ENCODE measurements at regions of chr10 and their contacts with region 1.

Region 1: GRCh38 chr10:72048450-72049124 is 39.8 kb downstream of the SPOCK2 start:
- DNase-seq: peak; percentile 85 to 97
- H3K4me3 ChIP-seq: no peak overlapping the region
- H3K27ac ChIP-seq: no peak overlapping the region
- H3K4me1 ChIP-seq: peaks cover 0 to 2% (median 0%) of the 10 kb centered on the region in 4 experiments; a peak in 2 of 7 replicates
- H3K27me3 ChIP-seq: no peaks in the 10 kb centered on the region
- CTCF ChIP-seq: peak; percentile 94 to 100 (median 100)
- EP300 ChIP-seq: peak in 1 of 2 experiments; percentile 74; a peak in 1 of 3 replicates
- POLR2A ChIP-seq: no peak
- RAD21 ChIP-seq: peak; percentile 97 to 98

Region 2: GRCh38 chr10:71902351-71902750 is 146.2 kb before region 1 on chr10:
- CTCF ChIA-PET with region 1: interaction called, 65 read pairs
- POLR2A ChIA-PET with region 1: no interaction called
- DNase-seq: no peak
- H3K4me3 ChIP-seq: no peak overlapping the region
- H3K27ac ChIP-seq: no peak overlapping the region
- H3K4me1 ChIP-seq: no peaks in the 10 kb centered on the region
- H3K27me3 ChIP-seq: no peaks in the 10 kb centered on the region
- CTCF ChIP-seq: no peak
- EP300 ChIP-seq: no peak
- POLR2A ChIP-seq: no peak
- RAD21 ChIP-seq: no peak

Region 3: GRCh38 chr10:71963756-71964668 is 84.6 kb before region 1 on chr10 and contains the start of gene CHST3:
- CTCF ChIA-PET with region 1: interaction called, 51 read pairs
- POLR2A ChIA-PET with region 1: no interaction called
- DNase-seq: peak in 1 of 2 experiments; percentile 78
- H3K4me3 ChIP-seq: peak within 1 kb of the TSS; percentile 60 to 97 (median 70)
- H3K27ac ChIP-seq: no peak within 1 kb of the TSS
- H3K4me1 ChIP-seq: peaks cover 2 to 10% (median 7%) of the 10 kb centered on the region in 4 experiments; a peak in 4 of 7 replicates
- H3K27me3 ChIP-seq: peaks cover 3 to 50% (median 35%) of the 10 kb centered on the region in 4 experiments
- CTCF ChIP-seq: no peak
- EP300 ChIP-seq: no peak
- POLR2A ChIP-seq: peak in 1 of 2 experiments; percentile 39; a peak in 1 of 3 replicates
- RAD21 ChIP-seq: no peak
- total RNA-seq, gene CHST3: 5.7 and 5.8 TPM in 2 replicates

Region 4: GRCh38 chr10:71985542-71986250 is 62.9 kb before region 1 on chr10:
- CTCF ChIA-PET with region 1: interaction called, 10 read pairs
- POLR2A ChIA-PET with region 1: no interaction called
- DNase-seq: no peak
- H3K4me3 ChIP-seq: no peak overlapping the region
- H3K27ac ChIP-seq: no peak overlapping the region
- H3K4me1 ChIP-seq: peaks cover 0 to 3% (median 1%) of the 10 kb centered on the region in 4 experiments; a peak in 1 of 7 replicates
- H3K27me3 ChIP-seq: no peaks in the 10 kb centered on the region
- CTCF ChIP-seq: no peak
- EP300 ChIP-seq: no peak
- POLR2A ChIP-seq: no peak
- RAD21 ChIP-seq: no peak

Region 5: GRCh38 chr10:72030762-72031543 is 17.6 kb before region 1 on chr10:
- CTCF ChIA-PET with region 1: interaction called, 13 read pairs
- POLR2A ChIA-PET with region 1: interaction called, 3 read pairs
- DNase-seq: no peak
- H3K4me3 ChIP-seq: no peak overlapping the region
- H3K27ac ChIP-seq: no peak overlapping the region
- H3K4me1 ChIP-seq: no peaks in the 10 kb centered on the region; a peak in 1 of 7 replicates
- H3K27me3 ChIP-seq: 0 out of 7 replicates have a peak, but pooled peaks cover 0 to 2% (median 0%) of the 10 kb centered on the region in 4 experiments
- CTCF ChIP-seq: no peak
- EP300 ChIP-seq: peak in 1 of 2 experiments; percentile 82; a peak in 1 of 3 replicates
- POLR2A ChIP-seq: no peak
- RAD21 ChIP-seq: no peak

Region 6: GRCh38 chr10:72061491-72061890 is 12.9 kb after region 1 on chr10:
- CTCF ChIA-PET with region 1: interaction called, 100 read pairs
- POLR2A ChIA-PET with region 1: interaction called, 4 read pairs
- DNase-seq: peak in 1 of 2 experiments; percentile 71
- H3K4me3 ChIP-seq: no peak overlapping the region
- H3K27ac ChIP-seq: no peak overlapping the region
- H3K4me1 ChIP-seq: peaks cover 0 to 9% (median 7%) of the 10 kb centered on the region in 4 experiments; a peak in 4 of 7 replicates
- H3K27me3 ChIP-seq: no peaks in the 10 kb centered on the region
- CTCF ChIP-seq: peak; percentile 70 to 76 (median 71)
- EP300 ChIP-seq: no peak
- POLR2A ChIP-seq: no peak
- RAD21 ChIP-seq: peak; percentile 64 to 74

Region 7: DNA sequence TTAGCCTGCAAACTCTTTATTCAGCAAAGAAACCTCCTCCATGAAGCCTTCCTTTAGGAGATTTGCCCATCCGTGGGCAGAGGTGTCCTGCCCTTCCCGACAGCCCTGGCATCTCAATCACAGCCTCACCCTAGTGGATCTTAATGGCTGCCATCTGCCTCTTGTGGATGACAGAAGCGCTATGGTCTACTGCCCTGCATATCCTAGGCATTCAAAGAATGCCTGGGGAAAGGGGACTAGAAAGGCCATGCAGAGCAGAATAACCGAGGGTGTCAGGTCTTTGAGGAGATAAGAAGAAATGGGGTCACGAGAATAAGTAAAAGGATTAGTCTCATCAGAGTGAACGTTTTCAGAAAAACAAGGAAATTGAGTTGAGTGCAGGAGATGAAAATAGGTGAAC is 97.5 kb after region 1 on chr10:
- CTCF ChIA-PET with region 1: no interaction called
- POLR2A ChIA-PET with region 1: no interaction called
- DNase-seq: no peak
- H3K4me3 ChIP-seq: no peak overlapping the region
- H3K27ac ChIP-seq: no peak overlapping the region
- H3K4me1 ChIP-seq: peaks cover 0 to 8% (median 5%) of the 10 kb centered on the region in 4 experiments; a peak in 5 of 7 replicates
- H3K27me3 ChIP-seq: no peaks in the 10 kb centered on the region
- CTCF ChIP-seq: no peak
- EP300 ChIP-seq: no peak
- POLR2A ChIP-seq: no peak
- RAD21 ChIP-seq: no peak

Region 8: DNA sequence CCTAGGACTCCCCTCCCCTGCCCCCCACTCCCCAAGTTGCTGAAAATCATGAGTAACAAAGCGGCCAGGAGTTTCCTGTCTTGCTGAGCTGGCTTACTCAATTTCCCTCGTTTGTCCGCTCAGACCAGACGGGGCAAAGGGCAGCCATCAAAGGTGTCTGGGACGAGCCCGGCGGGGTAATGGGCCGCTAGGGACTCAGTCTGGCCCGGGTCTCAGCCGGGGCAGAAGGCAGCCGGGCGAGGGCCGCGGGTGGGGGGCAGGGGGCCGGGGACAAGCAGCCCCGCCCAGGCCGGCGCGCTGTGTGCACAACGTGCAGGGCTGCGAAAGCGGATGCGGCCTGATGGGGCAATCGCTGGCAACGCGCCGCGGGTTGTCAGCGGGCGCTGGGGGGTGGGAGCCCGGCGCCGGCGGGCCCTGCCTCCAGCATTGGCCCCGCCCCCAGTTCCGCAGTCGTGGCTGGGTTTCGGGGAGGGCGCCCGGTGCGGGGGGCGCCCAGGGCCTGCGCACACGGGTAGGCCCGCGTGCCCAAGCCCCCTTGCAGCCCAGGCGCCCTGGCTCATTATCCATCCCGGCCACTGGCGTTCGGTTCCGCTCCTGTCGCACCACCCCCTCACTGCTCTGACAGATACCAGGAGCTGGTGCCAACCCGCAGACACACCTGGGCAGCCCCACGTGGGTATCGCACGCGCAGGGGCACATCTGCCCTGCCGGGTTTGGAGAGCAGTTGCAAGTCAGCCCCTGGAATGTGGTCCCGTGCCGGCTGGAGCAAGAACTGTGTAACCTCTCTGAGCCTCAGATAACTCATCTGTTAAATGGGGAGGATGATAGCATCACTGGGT is 271.0 kb after region 1 on chr10:
- CTCF ChIA-PET with region 1: interaction called, 10 read pairs
- POLR2A ChIA-PET with region 1: no interaction called
- DNase-seq: peak in 1 of 2 experiments; percentile 83
- H3K4me3 ChIP-seq: peak overlapping the region; percentile 14 to 55 (median 22); a peak in 5 of 8 replicates
- H3K27ac ChIP-seq: no peak overlapping the region
- H3K4me1 ChIP-seq: peaks cover 17 to 39% (median 26%) of the 10 kb centered on the region in 4 experiments
- H3K27me3 ChIP-seq: no peaks in the 10 kb centered on the region
- CTCF ChIP-seq: no peak
- EP300 ChIP-seq: peak in 1 of 2 experiments; percentile 56; a peak in 1 of 3 replicates
- POLR2A ChIP-seq: no peak; a peak in 1 of 3 replicates
- RAD21 ChIP-seq: no peak; a peak in 1 of 4 replicates

Measured in H1 (cell line).